Activated CD4-positive, alpha-beta memory T cell treated with anti-CD3 and anti-CD28 coated beads for 36 hours (primary cell): ENCODE measurements at regions of chr3 and their contacts with region 1.

Region 1: GRCh38 chr3:187738331-187739093 is 6.8 kb downstream of the BCL6 start:
- DNase-seq: peak; percentile 82
- H3K4me3 Mint-ChIP-seq: peak overlapping the region; percentile 90
- H3K27ac Mint-ChIP-seq: peak overlapping the region; percentile 99
- H3K4me1 Mint-ChIP-seq: peaks cover 44% of the 10 kb centered on the region
- H3K27me3 Mint-ChIP-seq: no peaks in the 10 kb centered on the region

Region 2: GRCh38 chr3:186394566-186395217 is 1343.8 kb before region 1 on chr3:
- CTCF ChIA-PET with region 1: no interaction called
- POLR2A ChIA-PET with region 1: no interaction called
- intact Hi-C with region 1: no loop called
- DNase-seq: no peak
- H3K4me3 Mint-ChIP-seq: no peak overlapping the region
- H3K27ac Mint-ChIP-seq: no peak overlapping the region
- H3K4me1 Mint-ChIP-seq: no peaks in the 10 kb centered on the region
- H3K27me3 Mint-ChIP-seq: no peaks in the 10 kb centered on the region

Region 3: DNA sequence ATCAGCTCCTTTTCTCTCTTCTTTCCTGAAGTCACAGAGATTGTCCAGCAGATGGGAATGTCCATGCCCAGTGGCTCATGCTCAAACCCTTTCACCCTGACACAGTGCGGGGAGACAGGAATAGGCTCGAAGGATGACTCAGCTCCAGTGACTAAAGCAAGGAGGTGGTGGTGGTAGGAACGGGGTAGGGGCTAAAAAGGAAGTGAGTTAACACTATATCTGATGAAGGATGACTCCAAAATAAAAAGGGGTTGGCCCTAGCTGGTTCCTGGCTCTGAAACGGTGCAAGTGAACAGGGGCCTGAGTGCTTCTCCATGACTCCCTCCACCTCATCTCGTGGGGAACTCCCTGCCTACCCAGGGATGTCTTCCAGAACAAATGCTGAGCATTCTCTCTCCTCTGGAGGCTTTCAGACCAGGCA is 248.0 kb after region 1 on chr3:
- CTCF ChIA-PET with region 1: interaction called, 12 read pairs
- POLR2A ChIA-PET with region 1: interaction called, 5 read pairs
- intact Hi-C with region 1: no loop called
- DNase-seq: peak; percentile 77
- H3K4me3 Mint-ChIP-seq: peak overlapping the region; percentile 2
- H3K27ac Mint-ChIP-seq: peak overlapping the region; percentile 83
- H3K4me1 Mint-ChIP-seq: peaks cover 56% of the 10 kb centered on the region
- H3K27me3 Mint-ChIP-seq: no peaks in the 10 kb centered on the region

Region 4: GRCh38 chr3:188034989-188035388 is 296.5 kb after region 1 on chr3:
- CTCF ChIA-PET with region 1: no interaction called
- POLR2A ChIA-PET with region 1: no interaction called
- intact Hi-C with region 1: no loop called
- DNase-seq: no peak
- H3K4me3 Mint-ChIP-seq: no peak overlapping the region
- H3K27ac Mint-ChIP-seq: no peak overlapping the region
- H3K4me1 Mint-ChIP-seq: peaks cover 7% of the 10 kb centered on the region
- H3K27me3 Mint-ChIP-seq: no peaks in the 10 kb centered on the region

Region 5: GRCh38 chr3:188257384-188258026 is 519.0 kb after region 1 on chr3:
- CTCF ChIA-PET with region 1: interaction called, 10 read pairs
- POLR2A ChIA-PET with region 1: interaction called, 4 read pairs
- intact Hi-C with region 1: loop called (anchors 1 kb)
- DNase-seq: no peak
- H3K4me3 Mint-ChIP-seq: no peak overlapping the region
- H3K27ac Mint-ChIP-seq: peak overlapping the region; percentile 47
- H3K4me1 Mint-ChIP-seq: peaks cover 49% of the 10 kb centered on the region
- H3K27me3 Mint-ChIP-seq: no peaks in the 10 kb centered on the region

Region 6: GRCh38 chr3:188339410-188340295 is 601.1 kb after region 1 on chr3:
- CTCF ChIA-PET with region 1: interaction called, 8 read pairs
- POLR2A ChIA-PET with region 1: interaction called, 3 read pairs
- intact Hi-C with region 1: loop called (anchors 1 kb)
- DNase-seq: peak; percentile 75
- H3K4me3 Mint-ChIP-seq: peak overlapping the region; percentile 68
- H3K27ac Mint-ChIP-seq: peak overlapping the region; percentile 93
- H3K4me1 Mint-ChIP-seq: peaks cover 44% of the 10 kb centered on the region
- H3K27me3 Mint-ChIP-seq: peaks cover 2% of the 10 kb centered on the region

Region 7: DNA sequence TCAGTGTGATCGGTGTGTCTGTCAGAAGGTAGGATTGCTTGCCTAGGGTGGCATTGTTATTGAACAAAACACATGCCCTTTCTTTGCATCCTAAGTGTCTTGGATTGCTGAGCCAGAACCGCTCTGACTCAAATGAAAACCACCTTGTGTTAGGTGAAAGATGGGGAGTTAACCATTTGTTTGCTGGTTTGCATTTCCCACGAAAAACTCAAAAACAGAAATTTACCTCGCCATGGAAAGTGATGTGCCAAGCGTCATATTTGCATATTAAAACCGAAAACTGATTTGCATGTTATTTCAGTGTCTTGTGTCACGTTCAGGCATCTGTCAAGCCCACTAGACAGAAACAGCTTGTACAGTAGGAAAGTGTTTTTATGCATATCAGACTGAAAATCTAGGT is 958.6 kb after region 1 on chr3:
- CTCF ChIA-PET with region 1: interaction called, 4 read pairs
- POLR2A ChIA-PET with region 1: no interaction called
- intact Hi-C with region 1: loop called (anchors 2 kb)
- DNase-seq: peak; percentile 55
- H3K4me3 Mint-ChIP-seq: no peak overlapping the region
- H3K27ac Mint-ChIP-seq: peak overlapping the region; percentile 7
- H3K4me1 Mint-ChIP-seq: peaks cover 50% of the 10 kb centered on the region
- H3K27me3 Mint-ChIP-seq: peaks cover 7% of the 10 kb centered on the region

Region 8: GRCh38 chr3:188830893-188831292 is 1092.4 kb after region 1 on chr3:
- CTCF ChIA-PET with region 1: interaction called, 19 read pairs
- POLR2A ChIA-PET with region 1: no interaction called
- intact Hi-C with region 1: loop called (anchors 5 kb)
- DNase-seq: no peak
- H3K4me3 Mint-ChIP-seq: no peak overlapping the region
- H3K27ac Mint-ChIP-seq: no peak overlapping the region
- H3K4me1 Mint-ChIP-seq: peaks cover 31% of the 10 kb centered on the region
- H3K27me3 Mint-ChIP-seq: no peaks in the 10 kb centered on the region

Region 9: GRCh38 chr3:189142527-189142926 is 1404.0 kb after region 1 on chr3:
- CTCF ChIA-PET with region 1: interaction called, 50 read pairs
- POLR2A ChIA-PET with region 1: no interaction called
- intact Hi-C with region 1: loop called (anchors 1 kb)
- DNase-seq: peak; percentile 58
- H3K4me3 Mint-ChIP-seq: no peak overlapping the region
- H3K27ac Mint-ChIP-seq: no peak overlapping the region
- H3K4me1 Mint-ChIP-seq: peaks cover 32% of the 10 kb centered on the region
- H3K27me3 Mint-ChIP-seq: no peaks in the 10 kb centered on the region